Ascending aorta (tissue), 2 donors: ENCODE measurements at regions of chr6 and their contacts with region 1.

Region 1: DNA sequence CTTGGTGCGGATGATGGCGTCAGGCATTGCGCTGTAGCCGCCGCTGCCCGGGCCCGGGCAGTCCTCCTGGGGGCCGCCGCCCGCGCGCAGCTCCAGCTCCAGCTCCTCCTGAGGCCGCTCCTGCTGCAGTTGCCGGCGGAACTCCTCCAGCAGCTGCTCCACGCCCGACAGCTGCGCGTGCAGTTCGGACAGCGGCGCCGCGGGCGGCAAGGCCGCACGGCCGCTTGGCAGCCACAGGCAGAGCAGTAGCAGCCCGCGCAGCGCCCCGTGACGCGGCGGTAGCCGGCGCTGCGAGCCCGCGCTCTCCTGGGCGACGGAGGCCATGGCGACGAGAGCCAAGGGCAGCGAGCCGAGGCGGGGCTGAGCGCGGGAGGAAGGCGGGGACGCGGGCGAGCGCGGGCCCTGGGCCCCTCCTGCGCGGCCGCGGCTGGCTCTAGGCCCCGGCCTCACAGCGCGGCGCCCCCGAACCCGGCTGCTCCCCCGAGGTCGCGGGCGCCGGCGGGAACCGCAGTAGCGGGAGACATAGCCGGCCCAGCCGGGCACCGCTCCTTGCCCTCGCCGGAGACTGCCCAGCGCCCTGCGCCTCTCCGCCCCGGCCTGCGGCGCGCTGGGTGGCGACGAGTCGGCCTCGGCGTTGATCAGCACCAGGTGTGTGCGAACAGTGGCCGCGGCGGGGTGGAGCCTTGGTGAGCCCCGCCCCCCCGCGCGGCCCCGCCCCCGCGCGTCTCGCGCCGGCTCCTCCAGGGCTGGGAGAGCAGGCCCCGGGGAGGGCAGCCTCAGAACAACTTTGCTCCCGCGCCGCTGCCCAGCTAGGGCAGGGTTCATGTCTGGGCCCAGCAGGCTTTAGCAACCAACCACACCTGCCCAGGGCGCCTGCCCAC is at the start of gene LRP11:
- DNase-seq: peak; percentile 47 to 91
- H3K4me3 ChIP-seq: peak within 1 kb of the TSS; percentile 68 to 74
- H3K27ac ChIP-seq: peak within 1 kb of the TSS; percentile 90 to 98
- H3K4me1 ChIP-seq: peaks cover 5 to 9% of the 10 kb centered on the region in 2 donors
- H3K27me3 ChIP-seq: no peaks in the 10 kb centered on the region
- CTCF ChIP-seq: no peak
- total RNA-seq, gene LRP11: 39.1 TPM

Region 2: GRCh38 chr6:149746147-149746946 is 117.6 kb before region 1 on chr6 and contains the start of gene NUP43:
- intact Hi-C with region 1: loop called (anchors 2 kb)
- DNase-seq: peak; percentile 64 to 96
- H3K4me3 ChIP-seq: peak within 1 kb of the TSS; percentile 70 to 73
- H3K27ac ChIP-seq: peak within 1 kb of the TSS; percentile 69 to 74
- H3K4me1 ChIP-seq: peaks cover 0 to 15% of the 10 kb centered on the region in 2 donors
- H3K27me3 ChIP-seq: no peaks in the 10 kb centered on the region
- CTCF ChIP-seq: peak; percentile 48 to 57 (median 49)
- total RNA-seq, gene NUP43: 2.9 TPM

Region 3: DNA sequence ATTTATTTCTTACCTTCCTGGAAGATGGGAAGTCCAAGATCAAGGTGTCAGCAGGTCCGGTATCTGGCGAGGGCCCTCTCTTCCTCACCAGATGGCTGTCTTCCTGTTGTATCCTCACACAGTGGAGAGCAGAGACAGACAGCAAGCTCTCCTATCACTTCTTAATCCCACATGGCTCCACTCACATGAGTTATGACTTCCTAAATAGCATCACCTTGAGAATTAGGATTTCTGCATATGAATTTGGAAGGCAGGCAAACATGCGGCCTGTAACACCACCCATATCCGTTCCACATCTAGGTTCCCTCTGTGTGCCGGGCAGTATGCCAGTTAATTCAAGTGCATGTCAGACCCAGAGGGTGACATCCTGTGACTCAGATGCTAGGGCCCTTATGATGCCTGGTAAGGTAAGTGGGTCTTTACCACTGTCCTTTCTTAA is 31.9 kb after region 1 on chr6:
- intact Hi-C with region 1: loop called (anchors 2 kb)
- DNase-seq: peak in 1 of 2 donors; percentile 73
- H3K4me3 ChIP-seq: no peak overlapping the region
- H3K27ac ChIP-seq: peak overlapping the region; percentile 77 to 86
- H3K4me1 ChIP-seq: peaks cover 12 to 26% of the 10 kb centered on the region in 2 donors
- H3K27me3 ChIP-seq: no peaks in the 10 kb centered on the region
- CTCF ChIP-seq: no peak